Mammary epithelial cell (primary cell): ENCODE measurements at regions of chr12 and their contacts with region 1.

Region 1: DNA sequence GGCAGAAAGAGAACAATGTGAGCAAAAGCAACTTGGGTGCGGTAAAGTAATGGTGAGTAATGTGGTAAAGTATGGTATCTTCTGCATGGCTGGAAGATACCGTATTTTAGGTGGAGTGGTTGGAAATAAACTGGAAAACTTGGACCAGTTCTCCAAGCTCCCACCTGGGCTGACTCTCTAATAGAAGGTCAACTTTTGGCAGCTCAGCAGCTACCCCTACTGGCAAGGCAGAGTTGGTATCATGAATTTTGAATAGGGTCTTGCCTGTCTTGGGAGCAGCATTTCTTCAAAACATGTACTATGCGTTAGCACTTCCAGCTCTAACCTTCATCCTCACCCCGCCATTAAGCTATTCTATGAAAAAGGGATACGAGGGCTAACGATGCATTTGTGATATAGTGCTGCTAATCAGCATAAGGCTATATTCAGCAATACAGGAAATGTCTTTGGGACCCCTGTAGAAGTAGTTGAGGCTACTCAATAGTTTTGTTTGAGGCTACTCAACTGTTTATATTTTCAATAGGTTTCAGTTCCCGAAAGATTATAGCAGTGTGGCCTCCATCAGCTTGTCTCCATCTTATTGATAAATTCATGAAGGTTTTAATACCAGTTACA is 276.3 kb upstream of the FAR2 start:
- DNase-seq: peak; percentile 78
- H3K4me3 ChIP-seq: no peak overlapping the region
- H3K27ac ChIP-seq: no peak overlapping the region
- H3K4me1 ChIP-seq: peaks cover 39% of the 10 kb centered on the region
- H3K27me3 ChIP-seq: no peaks in the 10 kb centered on the region
- CTCF ChIP-seq: peak; percentile 87 to 88

Region 2: DNA sequence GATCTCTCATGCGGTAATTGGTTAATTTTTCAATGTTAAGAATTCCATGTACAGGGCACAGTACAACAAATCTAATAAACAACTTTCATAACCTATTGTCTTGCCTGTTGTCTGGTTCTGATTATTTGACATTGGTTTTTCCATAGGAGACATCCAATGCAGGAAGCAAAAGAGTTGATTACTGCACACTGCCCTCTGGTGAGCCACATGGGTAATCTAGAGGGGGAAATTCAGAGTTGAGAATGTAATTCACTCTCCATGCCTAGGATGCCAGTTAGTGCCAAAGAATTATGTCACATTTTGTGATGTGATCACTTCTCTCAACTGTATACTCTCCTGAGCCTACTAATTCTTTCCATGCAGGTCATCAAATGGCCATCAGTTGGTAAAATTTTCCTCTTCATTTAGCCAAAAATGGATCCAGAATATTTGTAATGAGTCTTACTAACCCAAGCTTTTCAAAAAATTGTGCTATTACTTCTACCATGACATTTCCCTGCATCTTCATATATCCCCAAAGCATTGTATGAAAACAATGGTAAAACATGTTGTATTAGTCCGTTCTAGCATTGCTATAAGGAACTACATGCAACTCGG is 700.2 kb before region 1 on chr12:
- CTCF ChIA-PET with region 1: no interaction called
- dilution Hi-C with region 1: no loop called
- in situ Hi-C with region 1: loop called in 1 of 2 experiments (anchors 25 kb)
- intact Hi-C with region 1: loop called (anchors 1 kb)
- DNase-seq: peak; percentile 63
- H3K4me3 ChIP-seq: no peak overlapping the region
- H3K27ac ChIP-seq: peak overlapping the region; percentile 23
- H3K4me1 ChIP-seq: peaks cover 12% of the 10 kb centered on the region
- H3K27me3 ChIP-seq: no peaks in the 10 kb centered on the region
- CTCF ChIP-seq: peak; percentile 80 to 85

Region 3: DNA sequence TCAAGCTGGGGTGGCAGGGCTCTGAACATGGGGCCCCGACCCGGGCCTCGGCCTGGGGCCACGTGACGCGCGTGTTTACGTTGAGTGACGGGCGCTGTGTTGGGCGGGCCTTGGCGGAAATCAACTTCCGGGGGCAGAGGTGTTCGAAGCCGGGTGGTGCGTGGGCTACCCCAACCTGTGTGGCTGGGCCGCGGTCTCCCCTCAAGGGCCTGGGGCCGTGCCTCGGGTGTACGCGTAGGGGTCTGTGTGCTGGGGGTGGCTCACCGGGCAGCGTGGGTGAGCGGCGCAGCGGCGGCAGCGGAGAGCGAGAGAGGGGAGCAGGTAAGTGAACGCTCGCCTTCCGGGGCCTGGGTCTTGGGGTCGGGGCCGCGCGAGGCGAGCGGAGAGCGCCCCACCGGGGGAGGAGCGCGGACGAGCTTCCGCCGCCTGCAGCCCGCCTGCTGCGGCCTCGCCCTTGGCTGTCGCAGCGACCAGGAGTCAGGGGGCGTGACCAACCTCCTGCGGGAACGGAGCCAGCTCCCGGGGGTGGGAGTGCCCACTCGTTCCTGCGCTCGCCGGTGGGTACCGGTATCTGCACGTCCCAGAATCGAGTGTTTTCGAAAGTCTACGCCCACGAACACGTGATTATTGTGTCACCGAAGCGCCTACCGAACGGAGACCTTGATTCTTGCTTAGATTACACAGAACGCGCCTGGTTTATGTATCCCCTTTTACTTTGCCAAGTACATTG is 682.3 kb before region 1 on chr12 and contains the start of gene CCDC91:
- CTCF ChIA-PET with region 1: no interaction called
- dilution Hi-C with region 1: no loop called
- in situ Hi-C with region 1: loop called in 1 of 2 experiments (anchors 25 kb)
- intact Hi-C with region 1: loop called (anchors 2 kb)
- DNase-seq: peak; percentile 86
- H3K4me3 ChIP-seq: peak within 1 kb of the TSS; percentile 72 to 93 (median 88)
- H3K27ac ChIP-seq: peak within 1 kb of the TSS; percentile 96
- H3K4me1 ChIP-seq: peaks cover 16% of the 10 kb centered on the region
- H3K27me3 ChIP-seq: no peaks in the 10 kb centered on the region
- CTCF ChIP-seq: no peak
- total RNA-seq, gene CCDC91: 20.8 to 22.7 TPM

Region 4: DNA sequence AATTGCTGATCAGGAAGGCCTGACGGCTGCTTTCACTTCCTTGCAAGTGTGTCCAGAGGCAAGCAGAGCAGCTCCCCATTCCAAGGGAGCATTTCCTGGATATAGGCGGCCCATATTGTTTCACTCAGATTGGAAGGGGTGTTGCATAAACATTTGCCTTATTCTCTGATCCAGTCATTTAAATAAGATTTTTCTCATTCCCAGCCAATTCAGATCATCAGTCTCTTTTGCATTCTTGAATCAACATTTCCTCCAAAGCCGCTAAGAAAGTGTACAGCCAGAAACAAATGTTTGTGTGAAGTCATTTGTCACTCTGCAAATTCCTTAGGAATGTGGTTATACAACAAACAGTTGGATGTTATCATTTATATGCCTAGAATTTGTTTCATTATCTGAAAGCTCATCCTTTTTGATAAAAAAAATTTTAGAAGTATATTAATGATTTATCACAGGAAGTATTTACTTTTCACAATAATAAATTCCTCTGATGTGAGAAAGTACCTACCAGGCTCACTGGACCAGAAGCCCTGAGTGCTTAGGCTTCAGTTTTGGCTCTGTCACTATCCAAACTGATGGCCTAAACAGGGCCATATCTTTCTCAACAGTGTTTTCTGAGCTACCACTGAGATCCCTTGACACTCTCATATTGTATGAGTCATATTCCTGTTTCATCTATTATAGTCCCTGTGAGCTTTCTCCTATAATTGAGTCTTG is 302.9 kb before region 1 on chr12:
- CTCF ChIA-PET with region 1: no interaction called
- dilution Hi-C with region 1: no loop called
- in situ Hi-C with region 1: no loop called
- intact Hi-C with region 1: loop called (anchors 10 kb)
- DNase-seq: peak; percentile 50
- H3K4me3 ChIP-seq: no peak overlapping the region
- H3K27ac ChIP-seq: no peak overlapping the region
- H3K4me1 ChIP-seq: no peaks in the 10 kb centered on the region
- H3K27me3 ChIP-seq: no peaks in the 10 kb centered on the region
- CTCF ChIP-seq: no peak

Region 5: GRCh38 chr12:28963554-28963953 is 90.8 kb after region 1 on chr12:
- CTCF ChIA-PET with region 1: no interaction called
- dilution Hi-C with region 1: no loop called
- in situ Hi-C with region 1: no loop called
- intact Hi-C with region 1: loop called (anchors 1 kb)
- DNase-seq: peak; percentile 54
- H3K4me3 ChIP-seq: no peak overlapping the region
- H3K27ac ChIP-seq: no peak overlapping the region
- H3K4me1 ChIP-seq: peaks cover 7% of the 10 kb centered on the region
- H3K27me3 ChIP-seq: no peaks in the 10 kb centered on the region
- CTCF ChIP-seq: peak; percentile 66 to 68